ENCODE measurements at regions of chr6 and their contacts with region 1.

Region 1: DNA sequence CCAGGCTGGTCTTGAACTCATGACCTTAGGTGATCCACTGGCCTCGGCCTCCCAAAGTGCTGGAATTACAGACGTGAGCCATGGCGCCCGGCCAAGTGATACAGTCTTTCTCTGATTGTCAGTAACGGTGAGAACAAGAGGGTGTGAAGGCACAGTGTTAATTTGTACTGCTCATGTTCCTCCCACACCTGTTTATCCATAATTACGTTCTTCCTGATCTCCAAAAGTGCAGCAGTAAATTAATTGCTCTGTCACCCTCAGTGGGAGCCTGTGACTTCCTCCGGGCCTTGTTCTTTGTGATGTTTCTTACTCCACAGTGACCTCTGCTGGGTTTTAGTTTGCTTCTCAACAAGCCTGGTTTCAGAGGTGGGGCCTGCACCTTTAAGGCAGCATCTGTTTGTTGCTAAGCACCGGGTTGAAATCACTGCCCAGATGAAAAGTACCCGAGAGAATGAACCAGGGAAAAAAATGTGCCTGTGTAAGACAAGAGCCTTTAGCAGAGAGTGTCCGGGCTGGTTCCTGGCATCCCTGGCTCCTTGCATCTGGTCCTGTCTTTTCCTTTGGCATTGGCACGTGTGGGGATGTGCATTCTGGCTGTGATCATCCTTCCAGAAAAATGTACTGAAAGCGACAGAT is 89.1 kb upstream of the CLDN20 start:
- DNase-seq: peak; percentile 81
- H3K4me3 Mint-ChIP-seq: no peak overlapping the region
- H3K27ac Mint-ChIP-seq: no peak overlapping the region
- H3K4me1 Mint-ChIP-seq: peaks cover 48% of the 10 kb centered on the region
- H3K27me3 Mint-ChIP-seq: no peaks in the 10 kb centered on the region

Region 2: DNA sequence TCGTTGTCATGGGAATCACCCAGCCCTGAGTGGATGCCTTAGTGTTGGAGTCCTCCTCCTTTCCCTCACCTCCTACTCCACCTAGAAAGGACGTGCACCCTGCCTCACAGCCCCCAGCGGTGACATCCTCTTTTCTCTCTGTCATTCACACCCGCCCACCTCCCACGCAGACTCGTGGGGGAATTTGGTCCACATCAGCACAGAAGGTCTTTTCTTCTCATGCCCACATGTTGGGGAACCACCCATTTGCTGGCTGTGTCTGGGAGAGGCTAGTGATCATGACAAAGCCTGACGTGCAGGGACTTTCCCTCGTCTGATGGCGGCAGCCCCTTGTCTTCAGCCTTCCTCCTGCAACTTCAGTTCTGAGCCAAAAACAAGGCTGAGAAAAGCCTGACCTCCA is 568.2 kb before region 1 on chr6:
- CTCF ChIA-PET with region 1: no interaction called
- intact Hi-C with region 1: loop called (anchors 1 kb)
- DNase-seq: peak; percentile 97
- H3K4me3 Mint-ChIP-seq: peak overlapping the region; percentile 2
- H3K27ac Mint-ChIP-seq: peak overlapping the region; percentile 79
- H3K4me1 Mint-ChIP-seq: peaks cover 40% of the 10 kb centered on the region
- H3K27me3 Mint-ChIP-seq: peaks cover 2% of the 10 kb centered on the region

Region 3: DNA sequence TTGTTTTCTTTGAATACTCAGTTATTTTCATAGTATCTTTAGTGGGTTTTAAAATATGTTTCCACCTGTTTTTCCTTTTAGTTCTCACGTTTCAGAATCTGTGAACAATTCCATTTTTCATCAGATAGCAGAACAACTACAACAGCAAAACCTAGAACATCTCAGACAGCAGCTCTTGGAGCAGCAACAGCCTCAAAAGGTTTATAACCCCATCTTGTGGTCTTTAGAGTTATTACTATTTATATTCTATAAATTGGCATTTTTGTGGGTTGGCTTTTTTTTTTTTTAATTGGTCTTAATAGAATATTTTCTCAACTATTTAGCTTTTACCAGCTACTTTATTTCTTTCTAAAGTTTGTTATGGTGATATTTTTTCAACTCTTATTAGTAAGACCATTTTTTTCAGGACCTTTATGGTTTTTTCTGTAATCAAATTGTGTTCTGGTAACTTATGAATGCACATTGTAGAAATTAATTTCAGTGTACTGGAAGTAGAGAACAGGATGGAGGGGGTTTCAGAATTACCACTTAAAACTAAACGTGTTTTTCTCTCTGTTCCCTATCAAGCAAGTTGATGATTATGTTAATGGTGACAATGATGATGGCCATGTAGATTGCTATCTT is 369.3 kb before region 1 on chr6:
- CTCF ChIA-PET with region 1: no interaction called
- intact Hi-C with region 1: loop called (anchors 10 kb)
- DNase-seq: no peak
- H3K4me3 Mint-ChIP-seq: no peak overlapping the region
- H3K27ac Mint-ChIP-seq: no peak overlapping the region
- H3K4me1 Mint-ChIP-seq: peaks cover 6% of the 10 kb centered on the region
- H3K27me3 Mint-ChIP-seq: no peaks in the 10 kb centered on the region

Region 4: DNA sequence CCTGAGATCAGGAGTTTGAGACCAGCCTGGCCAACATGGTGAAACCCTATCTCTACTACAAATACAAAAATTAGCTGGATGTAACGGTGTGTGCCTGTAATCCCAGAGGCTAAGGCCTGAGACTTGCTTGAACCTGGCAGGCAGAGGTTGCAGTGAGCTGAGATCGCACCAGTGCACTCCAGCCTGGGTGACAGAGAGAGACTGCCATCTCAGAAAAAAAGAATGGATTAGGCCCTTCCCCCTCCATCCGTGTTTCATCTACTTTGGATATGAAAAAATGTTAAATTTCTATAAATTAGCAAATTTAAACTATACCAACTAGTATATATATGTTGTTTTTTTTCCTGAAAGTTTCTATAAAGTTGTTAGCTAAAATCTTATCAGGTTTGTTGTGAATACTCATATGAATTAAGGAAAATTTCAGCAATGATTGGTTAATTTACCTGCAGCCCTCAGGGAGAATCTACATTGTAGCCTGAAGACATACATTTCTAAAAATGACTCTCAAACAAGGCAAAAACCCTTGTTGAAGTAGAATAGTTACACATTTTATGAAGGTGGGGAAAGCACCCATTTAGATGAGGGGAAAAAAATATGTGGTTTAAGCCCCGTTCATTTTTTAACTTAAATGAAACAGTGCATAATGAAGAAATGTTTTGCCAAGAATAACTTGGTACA is 58.7 kb before region 1 on chr6:
- CTCF ChIA-PET with region 1: interaction called, 3 read pairs
- intact Hi-C with region 1: loop called (anchors 1 kb)
- DNase-seq: no peak
- H3K4me3 Mint-ChIP-seq: no peak overlapping the region
- H3K27ac Mint-ChIP-seq: peak overlapping the region; percentile 37
- H3K4me1 Mint-ChIP-seq: peaks cover 15% of the 10 kb centered on the region
- H3K27me3 Mint-ChIP-seq: peaks cover 7% of the 10 kb centered on the region

Region 5: GRCh38 chr6:155201461-155202226 is 26.9 kb after region 1 on chr6:
- CTCF ChIA-PET with region 1: no interaction called
- intact Hi-C with region 1: no loop called
- DNase-seq: no peak
- H3K4me3 Mint-ChIP-seq: no peak overlapping the region
- H3K27ac Mint-ChIP-seq: no peak overlapping the region
- H3K4me1 Mint-ChIP-seq: peaks cover 2% of the 10 kb centered on the region
- H3K27me3 Mint-ChIP-seq: peaks cover 4% of the 10 kb centered on the region

Region 6: GRCh38 chr6:155248008-155249001 is 73.6 kb after region 1 on chr6:
- CTCF ChIA-PET with region 1: interaction called, 26 read pairs
- intact Hi-C with region 1: loop called (anchors 1 kb)
- DNase-seq: peak; percentile 46
- H3K4me3 Mint-ChIP-seq: no peak overlapping the region
- H3K27ac Mint-ChIP-seq: no peak overlapping the region
- H3K4me1 Mint-ChIP-seq: no peaks in the 10 kb centered on the region
- H3K27me3 Mint-ChIP-seq: no peaks in the 10 kb centered on the region

Region 7: GRCh38 chr6:155335265-155335664 is 160.6 kb after region 1 on chr6:
- CTCF ChIA-PET with region 1: no interaction called
- intact Hi-C with region 1: no loop called
- DNase-seq: no peak
- H3K4me3 Mint-ChIP-seq: no peak overlapping the region
- H3K27ac Mint-ChIP-seq: no peak overlapping the region
- H3K4me1 Mint-ChIP-seq: peaks cover 63% of the 10 kb centered on the region
- H3K27me3 Mint-ChIP-seq: no peaks in the 10 kb centered on the region

Region 8: GRCh38 chr6:155493694-155494143 is 319.0 kb after region 1 on chr6:
- CTCF ChIA-PET with region 1: no interaction called
- intact Hi-C with region 1: loop called (anchors 10 kb)
- DNase-seq: peak; percentile 53
- H3K4me3 Mint-ChIP-seq: no peak overlapping the region
- H3K27ac Mint-ChIP-seq: peak overlapping the region; percentile 50
- H3K4me1 Mint-ChIP-seq: peaks cover 41% of the 10 kb centered on the region
- H3K27me3 Mint-ChIP-seq: no peaks in the 10 kb centered on the region

Region 9: GRCh38 chr6:156437121-156437879 is 1262.6 kb after region 1 on chr6:
- CTCF ChIA-PET with region 1: no interaction called
- intact Hi-C with region 1: no loop called
- DNase-seq: no peak
- H3K4me3 Mint-ChIP-seq: no peak overlapping the region
- H3K27ac Mint-ChIP-seq: no peak overlapping the region
- H3K4me1 Mint-ChIP-seq: no peaks in the 10 kb centered on the region
- H3K27me3 Mint-ChIP-seq: no peaks in the 10 kb centered on the region

Measured in activated naive CD4-positive, alpha-beta T cell treated with anti-CD3 and anti-CD28 coated beads for 36 hours (primary cell).